Calu3 (cell line): ENCODE measurements at regions of chr18 and their contacts with region 1.

Region 1: DNA sequence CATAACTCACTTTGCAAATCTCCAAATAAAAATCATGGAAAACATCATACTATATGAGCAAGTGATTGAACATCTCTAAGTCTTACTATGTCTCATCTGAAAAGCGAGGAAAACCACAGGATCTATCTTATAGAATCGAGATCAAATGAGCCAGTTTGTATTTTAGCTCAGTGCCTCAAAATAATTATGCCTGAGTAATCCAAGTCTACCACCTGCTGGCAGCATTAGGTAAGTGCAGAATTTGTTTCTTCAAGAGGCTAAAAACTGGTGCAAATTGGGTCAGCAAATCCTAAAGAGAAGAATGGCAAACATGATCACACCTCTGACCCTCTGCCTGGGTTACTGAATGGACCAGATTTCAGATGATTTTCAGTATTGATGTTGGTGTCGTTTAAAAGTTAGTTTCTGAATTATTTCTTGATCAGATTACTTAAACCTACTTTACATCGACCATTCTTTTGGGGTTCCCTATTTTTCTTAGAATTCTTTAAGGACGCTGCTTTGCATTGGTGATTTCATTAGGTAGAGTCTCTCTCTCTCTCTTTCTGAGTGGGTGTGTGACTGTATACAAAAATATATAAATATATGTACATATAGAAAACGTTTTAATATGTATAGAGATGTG is 12.7 kb upstream of the FHOD3 start:
- DNase-seq: peak; percentile 45
- H3K4me3 Mint-ChIP-seq: no peak overlapping the region
- H3K27ac Mint-ChIP-seq: no peak overlapping the region
- H3K4me1 Mint-ChIP-seq: no peaks in the 10 kb centered on the region
- H3K27me3 Mint-ChIP-seq: peaks cover 17% of the 10 kb centered on the region
- CTCF ChIP-seq: peak; percentile 65

Region 2: GRCh38 chr18:35756506-35757117 is 528.2 kb before region 1 on chr18:
- CTCF ChIA-PET with region 1: interaction called, 5 read pairs
- intact Hi-C with region 1: loop called (anchors 1 kb)
- DNase-seq: peak; percentile 68
- H3K4me3 Mint-ChIP-seq: no peak overlapping the region
- H3K27ac Mint-ChIP-seq: no peak overlapping the region
- H3K4me1 Mint-ChIP-seq: no peaks in the 10 kb centered on the region
- H3K27me3 Mint-ChIP-seq: peaks cover 43% of the 10 kb centered on the region
- CTCF ChIP-seq: peak; percentile 78

Region 3: DNA sequence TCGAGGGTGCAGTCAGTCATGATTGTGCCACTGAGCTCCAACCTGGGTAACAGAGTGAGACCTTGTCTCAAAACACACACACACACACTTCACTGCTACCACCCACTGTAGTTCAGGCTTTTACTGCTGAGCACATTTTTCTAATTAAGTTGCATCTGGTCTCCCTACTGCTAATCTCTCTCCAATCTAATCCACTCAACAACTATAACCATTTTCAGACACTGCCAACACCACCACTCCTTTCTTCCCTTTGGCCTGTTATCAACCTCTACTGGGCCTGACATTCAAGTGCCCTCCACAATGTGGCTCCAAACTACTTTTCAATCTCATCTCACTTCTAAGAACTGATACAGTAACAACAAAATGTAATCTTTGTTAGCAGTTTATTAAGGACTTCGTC is 267.6 kb before region 1 on chr18:
- CTCF ChIA-PET with region 1: interaction called, 7 read pairs
- intact Hi-C with region 1: loop called (anchors 1 kb)
- DNase-seq: no peak
- H3K4me3 Mint-ChIP-seq: no peak overlapping the region
- H3K27ac Mint-ChIP-seq: no peak overlapping the region
- H3K4me1 Mint-ChIP-seq: no peaks in the 10 kb centered on the region
- H3K27me3 Mint-ChIP-seq: no peaks in the 10 kb centered on the region
- CTCF ChIP-seq: no peak

Region 4: GRCh38 chr18:36095936-36096519 is 188.8 kb before region 1 on chr18:
- CTCF ChIA-PET with region 1: interaction called, 11 read pairs
- intact Hi-C with region 1: loop called (anchors 1 kb)
- DNase-seq: peak; percentile 5
- H3K4me3 Mint-ChIP-seq: no peak overlapping the region
- H3K27ac Mint-ChIP-seq: no peak overlapping the region
- H3K4me1 Mint-ChIP-seq: no peaks in the 10 kb centered on the region
- H3K27me3 Mint-ChIP-seq: no peaks in the 10 kb centered on the region
- CTCF ChIP-seq: peak; percentile 29

Region 5: GRCh38 chr18:36352384-36352783 is 67.6 kb after region 1 on chr18:
- CTCF ChIA-PET with region 1: no interaction called
- intact Hi-C with region 1: no loop called
- DNase-seq: no peak
- H3K4me3 Mint-ChIP-seq: no peak overlapping the region
- H3K27ac Mint-ChIP-seq: no peak overlapping the region
- H3K4me1 Mint-ChIP-seq: peaks cover 46% of the 10 kb centered on the region
- H3K27me3 Mint-ChIP-seq: no peaks in the 10 kb centered on the region
- CTCF ChIP-seq: no peak

Region 6: DNA sequence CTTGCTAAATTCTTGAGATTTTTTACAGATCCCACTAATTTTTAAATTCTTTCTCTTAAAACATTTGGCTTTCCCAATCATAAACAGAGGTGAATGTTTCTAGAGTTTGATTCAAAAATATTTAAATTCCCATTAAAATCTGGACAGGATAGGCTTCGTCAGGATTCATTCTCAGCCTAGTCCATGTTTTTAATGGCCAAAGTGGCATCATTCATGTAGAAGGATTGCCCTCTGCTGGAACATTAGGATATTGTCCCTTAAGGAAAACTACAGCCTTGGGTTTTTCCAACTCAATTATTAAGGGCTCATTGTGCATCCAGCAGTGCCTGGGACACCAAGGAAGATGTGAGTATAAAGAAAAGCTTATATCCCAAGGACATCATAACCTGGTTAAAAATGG is 472.3 kb after region 1 on chr18:
- CTCF ChIA-PET with region 1: interaction called, 4 read pairs
- intact Hi-C with region 1: loop called (anchors 10 kb)
- DNase-seq: peak; percentile 38
- H3K4me3 Mint-ChIP-seq: no peak overlapping the region
- H3K27ac Mint-ChIP-seq: no peak overlapping the region
- H3K4me1 Mint-ChIP-seq: peaks cover 12% of the 10 kb centered on the region
- H3K27me3 Mint-ChIP-seq: no peaks in the 10 kb centered on the region
- CTCF ChIP-seq: peak; percentile 48